Dorsolateral prefrontal cortex (tissue), 120 donors: ENCODE measurements at regions of chr4 and their contacts with region 1.

Region 1: GRCh38 chr4:146175541-146176453 is at the start of gene LSM6:
- DNase-seq: peak; percentile 86 to 94 (median 92)
- H3K4me3 ChIP-seq: peak within 1 kb of the TSS; percentile 66 to 100 (median 91)
- H3K27ac ChIP-seq: peak within 1 kb of the TSS; percentile 56 to 97 (median 91)
- H3K27me3 ChIP-seq: no peaks in the 10 kb centered on the region
- CTCF ChIP-seq: peak in 41 of 56 donors; percentile 13 to 57 (median 38)
- total RNA-seq, gene LSM6: 14.6 to 47.4 (median 24.5) TPM

Region 2: GRCh38 chr4:146522098-146522868 is 346.5 kb after region 1 on chr4:
- intact Hi-C with region 1: loop called in 1 of 2 experiments (anchors 5 kb)
- DNase-seq: peak; percentile 92 to 96 (median 94)
- H3K4me3 ChIP-seq: peak overlapping the region; percentile 65 to 100 (median 93)
- H3K27ac ChIP-seq: peak overlapping the region in 58 of 59 donors; percentile 24 to 93 (median 84)
- H3K27me3 ChIP-seq: no peaks in the 10 kb centered on the region
- CTCF ChIP-seq: peak in 4 of 56 donors; percentile 1 to 15 (median 8)